ENCODE measurements at regions of chr2 and their contacts with region 1.

Region 1: GRCh38 chr2:205474741-205475415 is 207.4 kb upstream of the NRP2 start:
- DNase-seq: no peak
- H3K4me3 Mint-ChIP-seq: no peak overlapping the region
- H3K27ac Mint-ChIP-seq: no peak overlapping the region
- H3K4me1 Mint-ChIP-seq: peaks cover 5% of the 10 kb centered on the region
- H3K27me3 Mint-ChIP-seq: peaks cover 50% of the 10 kb centered on the region

Region 2: GRCh38 chr2:205372141-205372540 is 102.7 kb before region 1 on chr2:
- intact Hi-C with region 1: loop called (anchors 5 kb)
- DNase-seq: no peak
- H3K4me3 Mint-ChIP-seq: no peak overlapping the region
- H3K27ac Mint-ChIP-seq: no peak overlapping the region
- H3K4me1 Mint-ChIP-seq: peaks cover 3% of the 10 kb centered on the region
- H3K27me3 Mint-ChIP-seq: peaks cover 16% of the 10 kb centered on the region

Region 3: GRCh38 chr2:205660521-205661124 is 185.7 kb after region 1 on chr2:
- intact Hi-C with region 1: loop called (anchors 5 kb)
- DNase-seq: peak; percentile 34
- H3K4me3 Mint-ChIP-seq: peak overlapping the region; percentile 27
- H3K27ac Mint-ChIP-seq: peak overlapping the region; percentile 63
- H3K4me1 Mint-ChIP-seq: peaks cover 54% of the 10 kb centered on the region
- H3K27me3 Mint-ChIP-seq: no peaks in the 10 kb centered on the region